Gastrocnemius medialis (tissue), 4 donors: ENCODE measurements at regions of chr1 and their contacts with region 1.

Region 1: DNA sequence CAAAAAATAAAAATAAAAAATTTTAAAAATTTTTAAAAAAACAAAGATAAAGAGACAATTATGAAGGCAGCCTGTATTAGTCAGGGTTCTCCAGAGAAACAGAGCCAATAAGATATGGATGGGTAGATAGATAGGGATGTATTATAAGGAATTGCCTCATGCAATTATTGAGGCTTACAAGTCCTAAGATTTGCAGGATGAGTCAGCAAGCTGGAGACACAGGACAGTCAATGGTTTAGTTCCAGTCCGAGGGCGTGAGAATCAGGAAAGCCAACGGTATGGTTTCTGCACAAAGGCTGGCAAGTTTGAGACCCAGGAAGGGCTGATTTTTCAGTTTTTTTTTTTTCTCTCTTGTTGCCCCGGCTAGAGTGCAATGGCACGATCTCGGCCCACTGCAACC is 24.1 kb upstream of the EIF4G3 start:
- DNase-seq: no peak
- ATAC-seq: no peak
- H3K4me3 ChIP-seq: no peak overlapping the region
- H3K27ac ChIP-seq: no peak overlapping the region
- H3K4me1 ChIP-seq: no peaks in the 10 kb centered on the region
- H3K27me3 ChIP-seq: no peaks in the 10 kb centered on the region
- CTCF ChIP-seq: no peak
- POLR2A ChIP-seq: no peak

Region 2: GRCh38 chr1:20981915-20982314 is 218.9 kb before region 1 on chr1:
- in situ Hi-C with region 1: loop called in 2 of 4 experiments (anchors 25 kb)
- intact Hi-C with region 1: loop called (anchors 2 kb)
- DNase-seq: no peak
- ATAC-seq: peak; percentile 48 to 61
- H3K4me3 ChIP-seq: no peak overlapping the region
- H3K27ac ChIP-seq: peak overlapping the region in 3 of 4 donors; percentile 12 to 49 (median 14)
- H3K4me1 ChIP-seq: peaks cover 18 to 26% of the 10 kb centered on the region in 2 donors
- H3K27me3 ChIP-seq: no peaks in the 10 kb centered on the region
- CTCF ChIP-seq: peak in 1 of 5 experiments; percentile 9
- POLR2A ChIP-seq: no peak

Region 3: GRCh38 chr1:21072721-21073120 is 128.0 kb before region 1 on chr1:
- in situ Hi-C with region 1: no loop called
- intact Hi-C with region 1: loop called (anchors 1 kb)
- DNase-seq: no peak
- ATAC-seq: peak; percentile 60 to 87
- H3K4me3 ChIP-seq: no peak overlapping the region
- H3K27ac ChIP-seq: peak overlapping the region in 2 of 4 donors; percentile 29 to 54
- H3K4me1 ChIP-seq: peaks cover 19 to 42% of the 10 kb centered on the region in 2 donors
- H3K27me3 ChIP-seq: no peaks in the 10 kb centered on the region
- CTCF ChIP-seq: no peak
- POLR2A ChIP-seq: no peak

Region 4: DNA sequence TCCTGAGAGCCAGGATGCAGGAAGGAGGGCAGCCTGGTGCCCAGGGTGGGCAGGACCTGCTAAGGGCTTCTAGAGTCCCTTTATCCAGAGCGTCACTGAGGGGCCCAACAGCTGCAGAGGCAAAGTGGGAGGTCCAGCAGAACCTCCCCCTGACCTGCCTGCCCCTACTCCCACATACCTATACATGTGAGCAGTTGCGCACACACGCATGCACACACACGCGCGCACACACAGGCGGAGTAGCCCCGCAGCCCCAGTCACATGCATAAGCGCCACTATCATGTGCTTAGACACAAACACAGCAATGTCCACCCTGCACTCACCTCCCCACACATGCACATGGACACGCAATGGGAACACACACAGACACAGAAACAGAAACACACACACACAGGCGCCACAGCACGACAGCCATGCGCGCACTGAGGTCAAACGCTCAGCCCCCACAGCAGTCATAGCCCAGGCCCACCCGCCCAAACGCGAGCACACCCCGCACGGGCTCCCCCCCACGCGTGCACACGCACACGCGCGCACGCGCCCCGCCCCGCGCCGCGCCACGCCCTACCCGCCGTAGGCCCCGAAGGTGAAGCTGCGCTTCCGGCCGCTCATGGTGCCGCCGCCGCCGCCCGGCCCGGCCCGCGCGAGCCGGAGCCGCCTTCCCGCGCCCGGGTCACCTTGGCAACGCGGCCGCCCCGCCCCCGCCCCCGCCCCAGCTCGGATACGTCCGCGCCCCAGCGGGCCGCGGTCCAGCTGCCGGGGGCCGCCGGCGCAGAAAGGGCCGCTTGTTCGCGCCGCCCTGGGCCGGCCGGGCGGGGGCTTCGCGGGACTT is 450.7 kb after region 1 on chr1:
- in situ Hi-C with region 1: no loop called
- intact Hi-C with region 1: no loop called
- DNase-seq: no peak
- ATAC-seq: no peak
- H3K4me3 ChIP-seq: peak overlapping the region in 3 of 4 donors; percentile 32 to 37 (median 36)
- H3K27ac ChIP-seq: no peak overlapping the region
- H3K4me1 ChIP-seq: no peaks in the 10 kb centered on the region
- H3K27me3 ChIP-seq: peaks cover 28 to 32% (median 30%) of the 10 kb centered on the region in 3 donors
- CTCF ChIP-seq: no peak
- POLR2A ChIP-seq: no peak